BJ (cell line): ENCODE measurements at regions of chr14 and their contacts with region 1.

Region 1: DNA sequence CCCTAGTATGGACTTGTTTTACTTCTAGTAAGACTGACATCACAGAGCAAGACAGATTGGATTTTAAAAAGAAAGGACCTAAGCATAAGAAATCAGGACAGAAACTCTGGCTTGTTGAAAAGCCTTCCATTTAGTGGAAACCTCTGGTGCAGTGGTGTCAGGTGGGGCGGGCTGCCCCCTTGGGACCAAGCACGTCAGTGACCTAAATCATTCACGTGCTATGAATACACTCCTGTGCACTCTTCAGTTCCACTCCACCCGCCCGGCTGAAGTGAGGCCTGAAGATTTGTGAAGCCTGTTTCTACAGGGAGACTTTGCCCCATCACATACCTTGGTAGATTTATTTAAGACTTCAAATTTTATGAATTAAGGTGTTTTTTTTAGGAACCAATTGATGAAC is 58.2 kb upstream of the STRN3 start:
- DNase-seq: no peak
- H3K4me3 ChIP-seq: no peak overlapping the region
- H3K27me3 ChIP-seq: no peaks in the 10 kb centered on the region
- CTCF ChIP-seq: no peak

Region 2: DNA sequence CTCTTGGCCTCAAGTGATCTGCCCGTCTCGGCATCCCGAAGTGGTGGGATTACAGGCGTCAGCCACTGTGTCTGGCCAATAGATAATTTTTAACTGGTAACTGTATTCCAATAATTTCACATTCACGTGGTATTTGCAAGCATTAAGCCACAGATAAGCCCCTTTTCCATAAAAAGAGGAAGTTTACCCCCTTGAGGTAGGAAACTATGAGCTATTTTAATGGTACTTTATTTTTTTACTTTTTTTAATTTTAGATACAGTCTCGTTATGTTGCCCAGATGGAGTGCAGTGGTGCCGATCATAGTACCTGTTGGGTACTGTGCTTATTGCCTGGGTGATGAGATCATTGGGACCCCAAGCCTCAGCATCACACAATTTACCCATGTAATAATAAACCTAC is 101.9 kb before region 1 on chr14:
- CTCF ChIA-PET with region 1: interaction called, 35 read pairs
- POLR2A ChIA-PET with region 1: no interaction called
- DNase-seq: no peak
- H3K4me3 ChIP-seq: no peak overlapping the region
- H3K27me3 ChIP-seq: no peaks in the 10 kb centered on the region
- CTCF ChIP-seq: no peak

Region 3: DNA sequence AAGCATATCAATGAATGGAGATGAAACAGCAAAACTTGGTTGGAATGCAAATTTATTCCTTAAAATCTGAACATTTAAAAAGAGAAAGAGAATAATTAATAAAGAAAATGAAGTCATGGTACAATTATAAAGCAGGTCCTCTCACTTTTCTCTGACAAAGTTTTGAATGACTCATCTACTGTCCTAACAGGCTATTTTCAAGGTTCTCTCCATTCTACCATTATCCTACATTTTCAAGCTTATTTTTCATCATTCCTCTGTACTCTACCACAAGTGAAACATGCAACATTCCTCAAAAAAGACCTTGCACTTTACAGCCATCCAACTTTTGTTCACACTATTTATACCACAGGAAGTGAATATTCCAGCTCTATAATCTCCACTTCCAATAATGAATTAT is 95.9 kb before region 1 on chr14:
- CTCF ChIA-PET with region 1: interaction called, 35 read pairs
- POLR2A ChIA-PET with region 1: no interaction called
- DNase-seq: no peak
- H3K4me3 ChIP-seq: no peak overlapping the region
- H3K27me3 ChIP-seq: no peaks in the 10 kb centered on the region
- CTCF ChIP-seq: no peak

Region 4: GRCh38 chr14:31043321-31043720 is 41.1 kb before region 1 on chr14:
- CTCF ChIA-PET with region 1: no interaction called
- POLR2A ChIA-PET with region 1: no interaction called
- DNase-seq: no peak
- H3K4me3 ChIP-seq: no peak overlapping the region
- H3K27me3 ChIP-seq: no peaks in the 10 kb centered on the region
- CTCF ChIP-seq: no peak